ENCODE measurements at regions of chr1 and their contacts with region 1.

Region 1: GRCh38 chr1:113928941-113929749 is at the start of gene HIPK1:
- DNase-seq: peak; percentile 91
- H3K4me3 Mint-ChIP-seq: peak within 1 kb of the TSS; percentile 98
- H3K27ac Mint-ChIP-seq: peak within 1 kb of the TSS; percentile 99
- H3K4me1 Mint-ChIP-seq: peaks cover 55% of the 10 kb centered on the region
- H3K27me3 Mint-ChIP-seq: peaks cover 7% of the 10 kb centered on the region
- total RNA-seq, gene HIPK1: 100 and 101 TPM in 2 replicates

Region 2: DNA sequence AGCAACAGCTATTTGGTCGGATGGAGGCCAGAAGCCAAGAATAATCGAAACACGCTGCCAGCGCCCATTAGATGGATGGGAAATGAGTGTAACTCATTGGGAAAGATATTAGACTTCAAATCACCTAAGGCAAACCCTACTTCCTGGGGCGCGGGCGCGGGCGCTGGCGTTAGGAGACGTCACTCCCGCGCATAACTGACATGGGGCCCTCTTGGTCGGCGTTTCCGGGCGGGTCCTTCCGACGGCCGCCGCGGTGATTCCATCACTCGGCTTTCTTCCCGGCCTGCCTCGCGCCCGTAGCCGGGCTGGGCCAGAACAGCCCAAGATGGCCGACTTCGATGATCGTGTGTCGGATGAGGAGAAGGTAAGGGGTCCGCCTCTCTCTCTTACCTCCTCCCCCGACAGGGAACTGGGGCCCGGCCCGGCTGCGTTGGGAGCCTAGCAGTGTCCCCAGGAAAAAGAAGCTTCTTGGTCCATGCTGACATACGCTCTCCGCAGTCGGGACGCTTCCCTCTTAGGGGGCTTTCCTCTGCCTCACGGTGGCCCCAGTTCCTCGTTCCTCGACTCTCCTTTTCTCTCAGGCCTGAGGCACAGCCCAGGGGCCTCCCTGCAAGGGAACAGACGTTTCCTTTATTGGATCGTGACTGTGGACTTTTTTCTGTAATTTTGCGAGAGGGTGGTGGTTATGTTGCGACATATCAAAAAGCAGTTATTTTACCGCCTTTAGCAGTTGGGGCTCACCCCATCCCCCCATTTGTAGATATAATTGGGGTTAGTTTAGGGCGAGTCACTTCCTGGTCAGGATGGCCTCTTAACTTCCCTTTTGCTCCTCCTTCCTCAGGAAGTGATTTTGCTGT is 1309.4 kb before region 1 on chr1 and contains the start of gene CAPZA1:
- intact Hi-C with region 1: loop called (anchors 5 kb)
- DNase-seq: peak; percentile 90
- H3K4me3 Mint-ChIP-seq: peak within 1 kb of the TSS; percentile 98
- H3K27ac Mint-ChIP-seq: peak within 1 kb of the TSS; percentile 98
- H3K4me1 Mint-ChIP-seq: peaks cover 48% of the 10 kb centered on the region
- H3K27me3 Mint-ChIP-seq: no peaks in the 10 kb centered on the region
- total RNA-seq, gene CAPZA1: 239 and 242 TPM in 2 replicates

Region 3: DNA sequence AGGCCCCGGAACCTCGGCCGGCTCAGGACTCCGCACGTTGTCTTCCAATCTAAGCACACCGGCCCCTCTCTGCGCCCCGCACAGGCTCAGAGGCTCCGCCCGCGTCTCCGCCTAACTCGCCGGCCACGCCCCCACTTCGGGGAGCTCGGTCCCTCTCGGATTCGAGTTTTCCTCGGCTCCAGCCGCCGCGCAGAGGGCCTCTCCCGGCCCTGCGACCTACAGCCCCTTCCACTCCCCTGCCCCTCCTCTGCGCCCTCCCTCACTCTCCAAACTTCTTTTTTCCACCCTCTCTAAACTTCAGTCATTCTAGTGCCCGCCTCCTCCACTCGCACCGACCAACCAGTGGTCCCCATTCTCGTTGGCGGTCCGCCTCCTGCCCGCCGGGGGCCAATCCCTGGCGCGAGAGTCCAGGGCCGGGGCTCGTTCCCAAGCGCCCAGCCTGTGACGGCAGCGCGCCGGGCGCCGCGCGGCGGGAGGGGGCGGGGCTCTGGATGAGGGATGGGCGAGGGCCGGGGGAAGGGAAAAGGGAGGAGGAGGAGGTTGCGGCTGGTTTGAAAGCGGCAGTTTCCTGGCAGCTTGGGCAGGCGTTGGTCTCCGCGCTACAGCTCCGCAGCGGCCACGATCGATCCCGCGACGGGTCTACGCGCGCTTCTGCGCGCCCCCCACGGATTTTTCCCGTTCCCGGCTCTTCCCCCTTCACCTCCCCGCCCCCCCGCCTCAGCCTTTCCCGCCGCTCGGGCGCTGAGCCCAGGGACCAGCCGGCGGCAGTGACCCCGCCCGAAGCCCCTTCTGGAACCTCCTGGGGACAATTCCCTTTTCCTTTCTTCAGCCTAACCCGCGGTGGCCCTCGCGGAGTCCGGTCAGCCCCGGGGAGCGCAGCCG is 539.0 kb before region 1 on chr1 and contains the start of gene MAGI3:
- intact Hi-C with region 1: loop called (anchors 1 kb)
- DNase-seq: peak; percentile 95
- H3K4me3 Mint-ChIP-seq: peak within 1 kb of the TSS; percentile 88
- H3K27ac Mint-ChIP-seq: peak within 1 kb of the TSS; percentile 79
- H3K4me1 Mint-ChIP-seq: peaks cover 30% of the 10 kb centered on the region
- H3K27me3 Mint-ChIP-seq: peaks cover 33% of the 10 kb centered on the region
- total RNA-seq, gene MAGI3: 3.0 and 3.2 TPM in 2 replicates

Region 4: GRCh38 chr1:113835642-113836307 is 93.4 kb before region 1 on chr1:
- intact Hi-C with region 1: loop called (anchors 1 kb)
- DNase-seq: no peak
- H3K4me3 Mint-ChIP-seq: no peak overlapping the region
- H3K27ac Mint-ChIP-seq: no peak overlapping the region
- H3K4me1 Mint-ChIP-seq: peaks cover 7% of the 10 kb centered on the region
- H3K27me3 Mint-ChIP-seq: no peaks in the 10 kb centered on the region

Region 5: DNA sequence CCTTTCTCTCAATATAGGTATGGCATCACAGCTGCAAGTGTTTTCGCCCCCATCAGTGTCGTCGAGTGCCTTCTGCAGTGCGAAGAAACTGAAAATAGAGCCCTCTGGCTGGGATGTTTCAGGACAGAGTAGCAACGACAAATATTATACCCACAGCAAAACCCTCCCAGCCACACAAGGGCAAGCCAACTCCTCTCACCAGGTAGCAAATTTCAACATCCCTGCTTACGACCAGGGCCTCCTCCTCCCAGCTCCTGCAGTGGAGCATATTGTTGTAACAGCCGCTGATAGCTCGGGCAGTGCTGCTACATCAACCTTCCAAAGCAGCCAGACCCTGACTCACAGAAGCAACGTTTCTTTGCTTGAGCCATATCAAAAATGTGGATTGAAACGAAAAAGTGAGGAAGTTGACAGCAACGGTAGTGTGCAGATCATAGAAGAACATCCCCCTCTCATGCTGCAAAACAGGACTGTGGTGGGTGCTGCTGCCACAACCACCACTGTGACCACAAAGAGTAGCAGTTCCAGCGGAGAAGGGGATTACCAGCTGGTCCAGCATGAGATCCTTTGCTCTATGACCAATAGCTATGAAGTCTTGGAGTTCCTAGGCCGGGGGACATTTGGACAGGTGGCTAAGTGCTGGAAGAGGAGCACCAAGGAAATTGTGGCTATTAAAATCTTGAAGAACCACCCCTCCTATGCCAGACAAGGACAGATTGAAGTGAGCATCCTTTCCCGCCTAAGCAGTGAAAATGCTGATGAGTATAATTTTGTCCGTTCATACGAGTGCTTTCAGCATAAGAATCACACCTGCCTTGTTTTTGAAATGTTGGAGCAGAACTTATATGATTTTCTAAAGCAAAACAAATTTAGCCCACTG is 11.5 kb after region 1 on chr1:
- intact Hi-C with region 1: loop called (anchors 1 kb)
- DNase-seq: peak; percentile 34
- H3K4me3 Mint-ChIP-seq: peak overlapping the region; percentile 75
- H3K27ac Mint-ChIP-seq: peak overlapping the region; percentile 89
- H3K4me1 Mint-ChIP-seq: peaks cover 67% of the 10 kb centered on the region
- H3K27me3 Mint-ChIP-seq: no peaks in the 10 kb centered on the region

Region 6: GRCh38 chr1:114009393-114009792 is 80.2 kb after region 1 on chr1:
- intact Hi-C with region 1: no loop called
- DNase-seq: no peak
- H3K4me3 Mint-ChIP-seq: no peak overlapping the region
- H3K27ac Mint-ChIP-seq: no peak overlapping the region
- H3K4me1 Mint-ChIP-seq: no peaks in the 10 kb centered on the region
- H3K27me3 Mint-ChIP-seq: peaks cover 8% of the 10 kb centered on the region

Region 7: GRCh38 chr1:114108751-114109255 is 179.7 kb after region 1 on chr1:
- intact Hi-C with region 1: no loop called
- DNase-seq: no peak
- H3K4me3 Mint-ChIP-seq: no peak overlapping the region
- H3K27ac Mint-ChIP-seq: no peak overlapping the region
- H3K4me1 Mint-ChIP-seq: peaks cover 9% of the 10 kb centered on the region
- H3K27me3 Mint-ChIP-seq: peaks cover 2% of the 10 kb centered on the region

Region 8: DNA sequence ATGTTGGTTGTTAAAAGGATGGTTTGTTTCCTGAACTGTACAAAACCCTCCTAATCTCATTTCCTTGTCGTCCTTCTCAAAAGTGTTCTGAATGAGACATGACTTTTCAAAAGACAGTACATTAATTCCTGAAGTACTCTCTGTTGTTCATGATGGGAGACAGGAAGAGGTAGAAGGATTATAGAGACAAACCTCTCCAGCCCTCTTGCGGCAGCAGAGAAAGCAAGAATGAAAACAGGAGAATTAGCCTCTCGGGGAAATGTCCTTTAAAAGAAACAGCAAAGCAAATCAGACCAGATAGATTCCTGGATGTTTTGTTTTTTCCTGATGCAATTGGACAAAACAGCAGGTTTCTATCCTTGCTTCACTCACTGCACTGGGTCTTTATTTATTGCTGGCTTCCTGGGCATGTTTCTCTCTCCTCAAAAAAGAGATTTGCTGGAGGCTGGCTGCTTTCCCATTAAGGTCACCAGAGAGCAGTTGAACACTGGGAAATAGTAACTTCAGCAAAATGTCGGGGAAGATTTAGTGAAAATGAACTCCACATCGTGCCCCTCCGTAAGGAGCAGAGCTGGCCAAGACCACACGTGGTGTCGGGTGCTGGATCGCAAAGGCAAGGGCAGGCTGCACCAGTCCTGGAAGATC is 370.3 kb after region 1 on chr1:
- intact Hi-C with region 1: no loop called
- DNase-seq: no peak
- H3K4me3 Mint-ChIP-seq: no peak overlapping the region
- H3K27ac Mint-ChIP-seq: no peak overlapping the region
- H3K4me1 Mint-ChIP-seq: no peaks in the 10 kb centered on the region
- H3K27me3 Mint-ChIP-seq: peaks cover 11% of the 10 kb centered on the region

Region 9: GRCh38 chr1:114581335-114582287 is 652.5 kb after region 1 on chr1 and contains the start of gene BCAS2:
- intact Hi-C with region 1: loop called (anchors 10 kb)
- DNase-seq: peak; percentile 94
- H3K4me3 Mint-ChIP-seq: peak within 1 kb of the TSS; percentile 91
- H3K27ac Mint-ChIP-seq: peak within 1 kb of the TSS; percentile 92
- H3K4me1 Mint-ChIP-seq: peaks cover 34% of the 10 kb centered on the region
- H3K27me3 Mint-ChIP-seq: peaks cover 5% of the 10 kb centered on the region
- total RNA-seq, gene BCAS2: 61.9 and 63.0 TPM in 2 replicates